ENCODE measurements at regions of chr13 and their contacts with region 1.

Region 1: DNA sequence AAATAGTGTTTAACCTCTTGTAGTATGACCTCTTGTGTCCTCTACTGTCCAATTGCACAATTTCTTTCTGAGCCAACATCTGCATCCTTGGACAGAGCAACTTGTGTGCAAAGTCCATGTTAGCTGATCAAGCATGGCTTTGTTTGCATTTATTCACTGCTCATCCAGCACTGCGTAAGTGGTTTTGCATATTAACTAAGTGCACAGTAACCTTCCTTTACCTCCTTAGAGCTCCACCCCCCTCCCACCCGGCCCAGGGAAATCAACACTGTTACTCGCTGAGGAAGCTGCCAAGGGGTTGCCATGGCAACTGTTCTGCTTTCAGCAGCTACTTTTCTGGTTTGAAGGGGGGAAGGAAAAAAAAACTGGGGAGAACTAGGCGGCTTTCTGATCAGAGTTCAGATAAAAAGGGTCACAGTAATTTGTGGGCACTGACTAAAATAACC is 153.5 kb upstream of the KLF12 start:
- DNase-seq: peak; percentile 94 to 95
- H3K4me3 ChIP-seq: no peak overlapping the region
- H3K27ac ChIP-seq: peak overlapping the region in 1 of 3 donors; percentile 45
- H3K4me1 ChIP-seq: peaks cover 26 to 41% of the 10 kb centered on the region in 2 donors
- H3K27me3 ChIP-seq: no peaks in the 10 kb centered on the region
- CTCF ChIP-seq: no peak
- POLR2A ChIP-seq: no peak

Region 2: GRCh38 chr13:72875233-72875632 is 1412.5 kb before region 1 on chr13:
- intact Hi-C with region 1: no loop called
- DNase-seq: no peak
- H3K4me3 ChIP-seq: no peak overlapping the region
- H3K27ac ChIP-seq: no peak overlapping the region
- H3K4me1 ChIP-seq: no peaks in the 10 kb centered on the region
- H3K27me3 ChIP-seq: no peaks in the 10 kb centered on the region
- CTCF ChIP-seq: no peak
- POLR2A ChIP-seq: no peak

Region 3: GRCh38 chr13:73835138-73835721 is 452.5 kb before region 1 on chr13:
- intact Hi-C with region 1: loop called (anchors 10 kb)
- DNase-seq: no peak
- H3K4me3 ChIP-seq: no peak overlapping the region
- H3K27ac ChIP-seq: no peak overlapping the region
- H3K4me1 ChIP-seq: no peaks in the 10 kb centered on the region
- H3K27me3 ChIP-seq: no peaks in the 10 kb centered on the region
- CTCF ChIP-seq: peak; percentile 15 to 80 (median 69)
- POLR2A ChIP-seq: no peak

Region 4: DNA sequence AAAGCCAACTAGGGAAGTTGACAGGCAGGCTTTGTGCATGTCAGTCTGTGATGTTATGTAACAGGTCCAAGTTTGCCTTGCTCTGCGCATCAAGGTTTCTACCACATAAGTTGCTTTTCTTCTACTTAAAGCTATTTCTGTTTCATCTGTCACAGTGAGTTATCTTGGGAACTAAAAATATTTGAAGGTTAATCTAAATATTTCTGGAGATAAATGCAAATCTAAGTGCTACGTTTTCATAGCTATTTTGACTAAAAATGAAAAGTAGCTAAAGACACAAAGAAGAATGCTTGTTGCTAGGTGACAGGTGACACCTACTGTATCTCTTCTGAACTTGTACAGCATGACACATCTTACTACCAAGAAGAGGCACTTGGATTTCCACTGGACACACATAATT is 289.1 kb before region 1 on chr13:
- intact Hi-C with region 1: no loop called
- DNase-seq: no peak
- H3K4me3 ChIP-seq: no peak overlapping the region
- H3K27ac ChIP-seq: no peak overlapping the region
- H3K4me1 ChIP-seq: no peaks in the 10 kb centered on the region
- H3K27me3 ChIP-seq: no peaks in the 10 kb centered on the region
- CTCF ChIP-seq: no peak
- POLR2A ChIP-seq: no peak

Region 5: GRCh38 chr13:74226791-74227475 is 60.8 kb before region 1 on chr13:
- intact Hi-C with region 1: no loop called
- DNase-seq: no peak
- H3K4me3 ChIP-seq: no peak overlapping the region
- H3K27ac ChIP-seq: no peak overlapping the region
- H3K4me1 ChIP-seq: no peaks in the 10 kb centered on the region
- H3K27me3 ChIP-seq: no peaks in the 10 kb centered on the region
- CTCF ChIP-seq: no peak
- POLR2A ChIP-seq: no peak

Measured in thyroid gland (tissue), 4 donors.